OCI-LY7 (cell line): ENCODE measurements at regions of chr10 and their contacts with region 1.

Region 1: GRCh38 chr10:73743905-73744663 is at the start of gene SEC24C:
- DNase-seq: peak; percentile 96
- H3K4me3 ChIP-seq: peak within 1 kb of the TSS; percentile 88
- H3K27ac ChIP-seq: peak within 1 kb of the TSS; percentile 74
- H3K4me1 ChIP-seq: peaks cover 23% of the 10 kb centered on the region
- CTCF ChIP-seq: 0 out of 2 replicates have a peak, but pooled peaks have one; percentile 21
- total RNA-seq, gene SEC24C: 51.9 and 53.6 TPM in 2 replicates

Region 2: DNA sequence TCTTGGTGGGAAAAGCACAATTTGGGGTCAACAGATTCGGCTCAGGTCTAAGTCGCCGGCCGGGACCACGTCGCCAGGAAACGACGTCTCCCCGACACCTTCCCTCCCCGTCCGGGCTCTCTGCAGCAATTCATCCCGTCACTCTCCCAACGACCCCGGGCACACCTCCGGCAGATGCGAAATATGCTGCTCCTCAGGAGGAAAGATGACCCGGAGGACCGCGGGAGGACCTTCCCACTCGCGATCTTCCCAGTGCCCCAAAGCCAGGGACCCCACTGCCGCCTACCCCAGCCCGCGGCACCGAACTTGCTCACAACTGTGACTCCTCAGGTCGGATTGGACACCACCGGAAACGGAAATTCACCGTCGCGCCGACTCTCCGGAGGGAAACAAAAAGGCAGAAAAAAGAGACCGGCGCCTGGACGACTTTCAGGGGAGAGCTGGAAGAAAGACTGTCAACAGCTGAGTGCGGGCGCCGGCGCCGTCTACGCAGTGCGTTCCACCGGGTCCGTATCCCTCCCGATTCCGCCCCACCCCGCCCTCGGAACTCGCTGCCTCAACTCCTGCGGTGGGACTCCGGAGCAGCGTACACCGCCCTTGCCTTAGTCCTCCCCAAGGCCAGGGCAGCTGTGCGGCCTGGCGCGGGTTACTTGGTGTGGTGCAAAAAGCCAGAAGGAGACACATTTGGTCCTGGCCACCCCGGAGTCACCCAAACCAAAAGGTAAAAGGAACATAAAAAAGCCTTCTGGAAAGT is 13.8 kb before region 1 on chr10:
- CTCF ChIA-PET with region 1: no interaction called
- POLR2A ChIA-PET with region 1: interaction called, 38 read pairs
- intact Hi-C with region 1: loop called (anchors 1 kb)
- DNase-seq: peak; percentile 92
- H3K4me3 ChIP-seq: peak overlapping the region; percentile 78
- H3K27ac ChIP-seq: peak overlapping the region; percentile 56
- H3K4me1 ChIP-seq: peaks cover 10% of the 10 kb centered on the region
- CTCF ChIP-seq: no peak

Region 3: GRCh38 chr10:73759512-73760115 is 15.5 kb after region 1 on chr10:
- CTCF ChIA-PET with region 1: interaction called, 3 read pairs
- POLR2A ChIA-PET with region 1: interaction called, 15 read pairs
- intact Hi-C with region 1: no loop called
- DNase-seq: peak; percentile 86
- H3K4me3 ChIP-seq: no peak overlapping the region
- H3K27ac ChIP-seq: peak overlapping the region; percentile 64
- H3K4me1 ChIP-seq: peaks cover 23% of the 10 kb centered on the region
- CTCF ChIP-seq: no peak

Region 4: DNA sequence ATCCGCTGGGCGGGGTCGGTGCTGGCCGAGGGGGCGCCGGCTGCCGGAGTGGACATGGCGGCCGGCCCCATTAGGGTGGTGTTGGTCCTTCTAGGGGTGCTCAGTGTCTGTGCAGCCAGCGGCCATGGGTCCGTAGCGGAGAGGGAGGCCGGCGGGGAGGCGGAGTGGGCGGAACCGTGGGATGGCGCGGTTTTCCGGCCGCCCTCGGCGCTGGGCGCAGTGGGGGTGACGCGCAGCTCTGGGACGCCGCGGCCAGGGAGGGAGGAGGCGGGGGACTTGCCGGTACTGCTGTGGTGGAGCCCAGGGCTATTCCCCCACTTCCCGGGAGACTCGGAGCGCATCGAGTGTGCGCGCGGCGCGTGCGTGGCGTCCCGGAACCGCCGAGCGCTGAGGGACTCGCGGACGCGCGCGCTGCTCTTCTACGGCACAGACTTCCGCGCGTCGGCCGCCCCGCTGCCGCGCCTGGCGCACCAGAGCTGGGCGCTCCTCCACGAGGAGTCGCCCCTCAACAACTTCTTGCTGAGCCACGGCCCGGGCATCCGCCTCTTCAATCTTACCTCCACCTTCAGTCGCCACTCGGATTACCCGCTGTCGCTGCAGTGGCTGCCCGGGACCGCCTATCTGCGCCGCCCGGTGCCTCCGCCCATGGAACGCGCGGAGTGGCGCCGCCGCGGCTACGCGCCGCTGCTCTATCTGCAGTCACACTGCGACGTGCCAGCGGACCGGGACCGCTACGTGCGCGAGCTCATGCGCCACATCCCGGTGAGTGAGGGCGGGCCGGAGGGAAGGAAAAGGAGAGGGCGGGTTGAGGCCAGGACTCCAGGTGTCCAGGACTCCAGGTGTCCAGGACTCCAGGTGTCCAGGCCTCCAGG is 28.4 kb after region 1 on chr10:
- CTCF ChIA-PET with region 1: interaction called, 5 read pairs
- POLR2A ChIA-PET with region 1: interaction called, 11 read pairs
- intact Hi-C with region 1: loop called (anchors 1 kb)
- DNase-seq: peak; percentile 82
- H3K4me3 ChIP-seq: peak overlapping the region; percentile 82
- H3K27ac ChIP-seq: peak overlapping the region; percentile 77
- H3K4me1 ChIP-seq: peaks cover 59% of the 10 kb centered on the region
- CTCF ChIP-seq: peak; percentile 45; the same call in 1 of the 2 replicates

Region 5: GRCh38 chr10:74640134-74640931 is 896.2 kb after region 1 on chr10:
- CTCF ChIA-PET with region 1: no interaction called
- POLR2A ChIA-PET with region 1: no interaction called
- intact Hi-C with region 1: no loop called
- DNase-seq: peak; percentile 64
- H3K4me3 ChIP-seq: no peak overlapping the region
- H3K27ac ChIP-seq: no peak overlapping the region
- H3K4me1 ChIP-seq: peaks cover 10% of the 10 kb centered on the region
- CTCF ChIP-seq: no peak